Caco-2 (cell line): ENCODE measurements at regions of chr1 and their contacts with region 1.

Region 1: DNA sequence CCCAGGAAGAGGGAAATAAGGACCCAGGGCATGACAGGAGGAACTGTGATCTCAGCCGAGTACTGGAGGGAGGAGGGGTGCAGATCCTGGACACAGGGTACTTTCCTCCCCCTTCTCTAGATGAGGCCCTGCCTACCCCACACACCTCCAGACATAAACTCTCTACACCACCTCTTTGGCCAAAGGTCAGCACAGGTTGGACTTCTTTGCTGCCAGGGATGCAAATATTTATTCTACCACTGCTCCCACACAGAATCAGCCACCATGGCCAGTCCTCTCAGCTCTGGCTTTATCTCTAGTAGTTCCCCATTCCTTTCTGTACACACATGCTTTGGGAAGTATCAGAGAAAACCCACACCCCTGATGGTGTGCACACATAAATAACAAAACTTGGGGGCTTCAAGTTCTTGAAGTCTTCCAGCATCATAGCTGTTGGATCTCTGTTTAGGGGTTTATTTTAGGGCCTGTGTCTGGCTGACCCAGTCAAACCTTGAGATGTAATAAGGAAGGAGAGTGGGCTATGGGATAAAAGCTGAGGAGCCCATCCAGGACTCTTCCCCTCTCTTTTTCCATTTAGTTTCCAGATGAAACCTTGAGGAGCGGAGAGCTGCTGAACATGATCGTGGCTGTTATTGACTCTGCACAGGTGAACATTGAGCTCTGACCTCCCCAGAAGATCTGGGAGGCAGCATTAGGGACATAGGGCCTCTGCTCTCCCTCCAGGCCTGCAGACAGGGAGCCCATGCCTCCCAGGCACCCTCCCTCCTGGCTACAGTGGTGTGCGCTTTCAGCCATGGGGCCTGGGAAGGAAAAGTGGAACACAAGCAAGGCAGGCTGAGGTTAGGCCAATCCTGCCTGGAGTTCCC is 6.7 kb upstream of the SLC27A3 start:
- DNase-seq: peak; percentile 68 to 77
- H3K4me3 ChIP-seq: no peak overlapping the region
- H3K4me3 Mint-ChIP-seq: peak overlapping the region; percentile 3
- H3K27ac Mint-ChIP-seq: peak overlapping the region; percentile 52
- H3K4me1 ChIP-seq: peaks cover 19% of the 10 kb centered on the region
- H3K4me1 Mint-ChIP-seq: peaks cover 32% of the 10 kb centered on the region
- H3K27me3 ChIP-seq: no peaks in the 10 kb centered on the region
- H3K27me3 Mint-ChIP-seq: no peaks in the 10 kb centered on the region
- CTCF ChIP-seq: no peak

Region 2: DNA sequence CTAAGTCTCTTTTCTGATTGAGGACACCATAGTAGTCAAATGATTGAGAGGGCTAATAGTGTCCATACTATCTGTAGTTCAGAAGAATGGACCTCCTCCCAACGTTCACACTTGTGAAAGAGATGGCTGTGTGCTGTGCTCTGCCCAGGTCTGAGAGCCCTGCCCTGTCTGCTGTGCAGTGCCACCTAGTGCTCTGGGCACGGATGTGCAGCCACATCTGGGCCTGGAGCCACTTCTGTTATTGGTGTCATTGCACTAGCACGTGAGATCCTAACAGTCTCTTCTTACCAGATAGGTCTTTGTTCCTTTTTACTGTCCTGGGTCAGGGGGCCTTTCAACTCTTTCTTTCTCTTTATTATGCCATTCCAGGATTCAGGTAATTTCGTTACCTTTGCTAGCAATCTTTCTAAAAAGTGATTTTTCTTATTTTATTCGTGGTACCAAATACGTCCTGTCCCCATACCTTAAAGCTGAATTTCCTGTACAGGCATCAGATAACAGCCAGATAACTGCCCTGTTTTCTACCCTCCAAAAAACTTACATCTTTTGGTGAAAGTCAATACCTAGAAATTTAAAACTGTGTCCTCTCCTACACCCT is 19.0 kb before region 1 on chr1:
- CTCF ChIA-PET with region 1: no interaction called
- POLR2A ChIA-PET with region 1: no interaction called
- intact Hi-C with region 1: loop called (anchors 2 kb)
- DNase-seq: peak; percentile 79 to 85
- H3K4me3 ChIP-seq: no peak overlapping the region
- H3K4me3 Mint-ChIP-seq: no peak overlapping the region
- H3K27ac Mint-ChIP-seq: no peak overlapping the region
- H3K4me1 ChIP-seq: no peaks in the 10 kb centered on the region
- H3K4me1 Mint-ChIP-seq: peaks cover under 1% of the 10 kb centered on the region
- H3K27me3 ChIP-seq: no peaks in the 10 kb centered on the region
- H3K27me3 Mint-ChIP-seq: no peaks in the 10 kb centered on the region
- CTCF ChIP-seq: peak; percentile 88 to 97

Region 3: GRCh38 chr1:154288661-154289060 is 520.1 kb after region 1 on chr1:
- CTCF ChIA-PET with region 1: no interaction called
- POLR2A ChIA-PET with region 1: no interaction called
- intact Hi-C with region 1: no loop called
- DNase-seq: no peak
- H3K4me3 ChIP-seq: no peak overlapping the region
- H3K4me3 Mint-ChIP-seq: no peak overlapping the region
- H3K27ac Mint-ChIP-seq: no peak overlapping the region
- H3K4me1 ChIP-seq: no peaks in the 10 kb centered on the region
- H3K4me1 Mint-ChIP-seq: no peaks in the 10 kb centered on the region
- H3K27me3 ChIP-seq: no peaks in the 10 kb centered on the region
- H3K27me3 Mint-ChIP-seq: no peaks in the 10 kb centered on the region
- CTCF ChIP-seq: no peak